ENCODE measurements at regions of chr22 and their contacts with region 1.

Region 1: DNA sequence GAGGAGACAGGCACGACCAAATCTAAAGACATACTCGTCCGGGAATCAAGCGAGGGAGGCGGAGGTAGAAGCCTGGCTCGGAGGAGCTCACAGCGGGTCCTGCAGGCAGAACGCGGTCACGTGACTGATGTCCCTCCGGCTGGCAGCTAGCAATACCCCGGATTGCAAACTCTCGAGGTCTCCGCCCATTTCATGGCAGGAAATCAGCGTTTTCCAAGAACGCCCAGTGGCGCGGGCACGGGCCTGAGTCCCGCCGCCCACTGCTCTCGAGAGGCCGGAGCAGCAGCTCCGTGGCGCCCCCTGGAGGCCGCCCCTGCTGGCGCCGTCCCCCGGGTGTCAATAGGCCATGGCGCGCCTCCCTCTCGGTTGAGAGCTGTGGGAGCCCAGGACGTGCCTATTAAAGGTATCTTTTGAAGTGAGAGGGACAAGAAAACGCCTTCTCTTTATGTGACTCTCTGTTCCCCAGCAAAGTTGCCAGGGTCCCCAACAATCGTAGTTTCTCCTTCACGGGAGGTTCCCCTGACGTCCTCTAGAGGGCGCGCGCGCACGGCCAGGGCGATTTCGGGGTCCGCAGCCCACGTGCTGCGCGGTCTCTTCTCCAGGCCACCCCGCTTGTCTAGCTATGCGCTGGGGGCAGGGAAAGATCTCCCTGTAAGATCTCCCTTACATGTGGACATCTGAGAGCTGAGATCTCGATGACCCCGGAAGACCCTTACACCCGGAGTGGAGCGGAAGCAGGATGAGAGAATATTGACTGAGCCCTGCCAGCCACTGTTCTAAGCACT is 37.3 kb upstream of the RBFOX2 start:
- DNase-seq: peak; percentile 88 to 94 (median 92)
- ATAC-seq: peak; percentile 92 to 94 (median 93)
- H3K4me3 ChIP-seq: peak overlapping the region; percentile 15 to 69 (median 58)
- H3K27ac ChIP-seq: peak overlapping the region; percentile 72 to 91 (median 82)
- H3K4me1 ChIP-seq: peaks cover 0 to 18% (median 6%) of the 10 kb centered on the region in 12 donors
- H3K27me3 ChIP-seq: no peaks in the 10 kb centered on the region
- CTCF ChIP-seq: peak; percentile 100
- POLR2A ChIP-seq: peak in 1 of 2 donors; percentile 32

Region 2: GRCh38 chr22:35930933-35931332 is 135.0 kb before region 1 on chr22:
- intact Hi-C with region 1: loop called in 9 of 10 experiments (anchors 1 to 5 kb)
- DNase-seq: peak in 1 of 5 donors; percentile 57
- ATAC-seq: peak; percentile 86 to 96 (median 94)
- H3K4me3 ChIP-seq: no peak overlapping the region
- H3K27ac ChIP-seq: peak overlapping the region in 1 of 12 donors; percentile 15
- H3K4me1 ChIP-seq: peaks cover 0 to 12% (median 3%) of the 10 kb centered on the region in 12 donors
- H3K27me3 ChIP-seq: no peaks in the 10 kb centered on the region
- CTCF ChIP-seq: peak; percentile 38 to 85 (median 72)
- POLR2A ChIP-seq: no peak

Region 3: GRCh38 chr22:36097880-36098279 is 31.9 kb after region 1 on chr22:
- intact Hi-C with region 1: no loop called
- DNase-seq: no peak
- ATAC-seq: peak in 1 of 4 donors; percentile 36
- H3K4me3 ChIP-seq: no peak overlapping the region
- H3K27ac ChIP-seq: no peak overlapping the region
- H3K4me1 ChIP-seq: no peaks in the 10 kb centered on the region
- H3K27me3 ChIP-seq: no peaks in the 10 kb centered on the region
- CTCF ChIP-seq: no peak
- POLR2A ChIP-seq: no peak

Region 4: GRCh38 chr22:36110306-36110881 is 44.4 kb after region 1 on chr22:
- intact Hi-C with region 1: no loop called
- DNase-seq: no peak
- ATAC-seq: peak in 1 of 4 donors; percentile 27
- H3K4me3 ChIP-seq: no peak overlapping the region
- H3K27ac ChIP-seq: no peak overlapping the region
- H3K4me1 ChIP-seq: peaks cover 0 to 2% (median 0%) of the 10 kb centered on the region in 12 donors
- H3K27me3 ChIP-seq: no peaks in the 10 kb centered on the region
- CTCF ChIP-seq: no peak
- POLR2A ChIP-seq: no peak

Region 5: DNA sequence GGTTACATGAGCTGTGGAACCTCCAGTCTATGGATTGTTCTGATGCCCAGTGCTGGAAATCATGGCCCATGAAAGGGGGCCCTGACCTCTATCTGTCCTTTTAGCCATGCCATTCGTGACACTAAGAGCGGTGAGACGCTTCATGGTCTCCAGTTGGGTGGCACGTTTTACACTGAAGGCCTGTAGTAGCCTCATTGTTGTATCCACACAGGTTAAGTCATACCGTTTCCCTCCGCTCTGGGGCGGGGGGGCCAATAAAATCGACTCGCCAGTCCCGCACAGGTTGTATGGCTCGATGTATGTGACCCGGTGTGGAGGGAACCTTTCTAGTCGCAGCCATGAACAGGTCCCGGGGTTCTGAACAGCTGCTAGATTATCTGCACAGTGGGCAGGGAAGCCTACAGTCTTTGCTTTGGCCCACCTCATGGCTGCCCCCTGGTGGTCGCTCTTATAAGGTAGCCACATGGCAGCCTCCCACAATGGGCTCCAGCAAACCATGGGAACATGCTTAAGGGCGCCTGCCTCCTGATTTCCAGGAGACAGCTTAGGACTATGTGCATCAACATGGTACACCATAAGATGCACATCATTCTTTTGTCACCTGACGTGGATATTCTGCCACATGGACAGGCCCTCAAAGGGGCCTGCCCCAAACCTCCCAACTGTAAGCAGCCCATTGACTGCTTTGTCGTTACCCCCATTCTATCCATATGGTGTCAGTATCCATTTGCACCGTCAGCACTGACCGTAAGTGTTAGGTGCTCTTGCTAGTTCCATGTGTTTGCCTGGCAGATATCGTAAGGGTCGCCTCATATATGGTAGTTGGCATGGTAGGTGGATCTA is 114.3 kb after region 1 on chr22:
- intact Hi-C with region 1: loop called in 1 of 10 experiments (anchors 5 kb)
- DNase-seq: peak; percentile 81 to 92 (median 86)
- ATAC-seq: peak; percentile 79 to 96 (median 92)
- H3K4me3 ChIP-seq: no peak overlapping the region
- H3K27ac ChIP-seq: peak overlapping the region in 1 of 12 donors; percentile 3
- H3K4me1 ChIP-seq: peaks cover 0 to 19% (median 4%) of the 10 kb centered on the region in 12 donors
- H3K27me3 ChIP-seq: no peaks in the 10 kb centered on the region
- CTCF ChIP-seq: peak; percentile 80 to 97 (median 86)
- POLR2A ChIP-seq: no peak